ENCODE measurements at regions of chr19 and their contacts with region 1.

Region 1: DNA sequence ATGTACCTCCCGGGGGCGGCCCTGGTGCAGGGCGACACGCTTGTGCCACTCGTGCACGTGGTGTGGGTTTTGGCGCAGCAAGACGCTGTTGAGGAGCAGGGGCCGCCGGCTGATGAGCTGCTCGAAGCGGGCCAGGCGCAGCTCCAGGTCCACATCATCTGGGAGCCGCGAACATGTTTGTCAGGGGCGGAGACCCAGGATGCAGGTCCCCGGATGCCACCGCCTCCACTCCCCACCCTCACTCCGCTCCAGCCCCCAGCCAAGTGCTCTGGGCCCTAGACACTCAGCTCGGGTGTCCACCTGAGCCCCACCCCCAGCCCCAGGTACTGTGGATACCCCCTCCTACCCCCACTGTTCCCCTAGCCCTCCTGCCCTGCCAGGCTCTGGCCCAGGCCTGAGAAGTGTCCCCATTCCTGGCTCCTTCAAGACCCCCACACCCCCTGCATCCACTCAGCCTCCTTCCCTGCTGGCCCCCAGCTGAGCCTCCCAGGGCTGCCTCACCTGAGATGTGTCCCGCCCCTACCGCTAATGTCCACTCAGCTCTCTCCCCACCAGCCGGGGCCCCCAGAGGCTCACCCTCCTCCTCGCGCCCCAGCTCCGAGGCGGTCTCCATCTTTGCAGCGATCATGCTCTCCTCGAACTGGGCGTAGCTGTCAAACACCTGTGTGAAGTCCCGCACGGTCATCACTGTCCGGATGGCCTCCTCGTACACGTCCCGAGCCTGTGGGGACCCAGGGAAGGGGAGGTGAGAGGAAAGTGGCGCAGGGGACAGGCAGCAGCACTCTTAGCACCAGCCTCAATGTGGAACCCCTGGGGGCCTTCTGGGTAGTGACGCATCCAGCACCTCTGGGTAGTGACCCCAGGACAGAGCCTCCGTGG is 5.4 kb downstream of the XAB2 start:
- DNase-seq: no peak
- H3K27ac ChIP-seq: no peak overlapping the region
- CTCF ChIP-seq: no peak

Region 2: GRCh38 chr19:7287722-7288500 is 336.1 kb before region 1 on chr19:
- CTCF ChIA-PET with region 1: no interaction called
- POLR2A ChIA-PET with region 1: no interaction called
- DNase-seq: no peak
- H3K27ac ChIP-seq: no peak overlapping the region
- CTCF ChIP-seq: no peak

Region 3: DNA sequence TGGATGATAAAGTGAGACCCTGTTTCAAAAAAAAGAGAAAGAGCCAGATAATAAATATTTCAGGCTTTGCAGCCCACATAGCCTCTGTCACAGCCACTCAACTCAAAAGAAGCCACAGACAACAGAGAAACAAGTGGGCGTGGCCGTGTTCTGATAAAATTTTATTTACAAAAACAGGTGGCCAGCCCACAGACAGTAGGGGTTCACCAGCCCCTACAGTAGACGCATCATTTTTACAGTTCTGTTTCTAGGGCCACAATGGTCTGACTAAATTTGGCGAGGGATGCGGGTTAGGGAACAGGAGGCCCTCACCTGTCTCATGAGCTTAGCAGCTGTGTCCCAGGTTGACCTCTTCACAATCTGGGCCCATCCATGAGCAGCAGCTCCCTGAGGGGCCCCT is 215.7 kb before region 1 on chr19:
- CTCF ChIA-PET with region 1: no interaction called
- POLR2A ChIA-PET with region 1: no interaction called
- DNase-seq: no peak
- H3K27ac ChIP-seq: no peak overlapping the region
- CTCF ChIP-seq: no peak

Region 4: DNA sequence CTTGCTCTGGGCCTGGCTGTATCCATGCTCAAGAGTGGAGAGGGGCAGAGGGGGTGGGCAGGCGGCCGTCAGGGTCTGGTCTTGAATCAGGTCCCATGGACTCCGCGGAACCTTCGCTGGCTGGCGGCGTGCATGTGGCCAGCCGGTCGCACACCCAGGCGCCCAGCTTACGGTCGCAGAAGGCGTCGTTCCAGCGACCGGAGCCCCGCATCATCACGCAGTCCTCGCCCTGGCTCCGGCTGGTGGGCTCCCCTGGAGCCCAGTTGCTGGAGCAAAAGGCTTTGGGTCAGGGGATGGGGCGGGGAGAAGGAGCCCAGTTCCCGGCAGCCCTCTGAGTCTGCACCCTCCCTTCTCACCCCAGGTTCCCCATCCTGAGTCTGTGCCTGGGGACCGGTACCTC is 65.2 kb after region 1 on chr19:
- CTCF ChIA-PET with region 1: no interaction called
- POLR2A ChIA-PET with region 1: no interaction called
- DNase-seq: no peak
- H3K27ac ChIP-seq: no peak overlapping the region
- CTCF ChIP-seq: no peak

Region 5: GRCh38 chr19:7815325-7815724 is 191.4 kb after region 1 on chr19:
- CTCF ChIA-PET with region 1: no interaction called
- POLR2A ChIA-PET with region 1: interaction called, 13 read pairs
- DNase-seq: no peak
- H3K27ac ChIP-seq: no peak overlapping the region
- CTCF ChIP-seq: no peak

Measured in RWPE1 (cell line).